Psoas muscle (tissue), 8 donors: ENCODE measurements at regions of chr4 and their contacts with region 1.

Region 1: GRCh38 chr4:2402029-2402428 is 16.4 kb downstream of the ZFYVE28 start:
- DNase-seq: peak; percentile 80 to 86
- ATAC-seq: peak; percentile 88 to 95 (median 93)
- H3K4me3 ChIP-seq: peak overlapping the region; percentile 54
- H3K27ac ChIP-seq: peak overlapping the region; percentile 71
- H3K4me1 ChIP-seq: peaks cover 24% of the 10 kb centered on the region
- H3K27me3 ChIP-seq: no peaks in the 10 kb centered on the region
- CTCF ChIP-seq: no peak

Region 2: DNA sequence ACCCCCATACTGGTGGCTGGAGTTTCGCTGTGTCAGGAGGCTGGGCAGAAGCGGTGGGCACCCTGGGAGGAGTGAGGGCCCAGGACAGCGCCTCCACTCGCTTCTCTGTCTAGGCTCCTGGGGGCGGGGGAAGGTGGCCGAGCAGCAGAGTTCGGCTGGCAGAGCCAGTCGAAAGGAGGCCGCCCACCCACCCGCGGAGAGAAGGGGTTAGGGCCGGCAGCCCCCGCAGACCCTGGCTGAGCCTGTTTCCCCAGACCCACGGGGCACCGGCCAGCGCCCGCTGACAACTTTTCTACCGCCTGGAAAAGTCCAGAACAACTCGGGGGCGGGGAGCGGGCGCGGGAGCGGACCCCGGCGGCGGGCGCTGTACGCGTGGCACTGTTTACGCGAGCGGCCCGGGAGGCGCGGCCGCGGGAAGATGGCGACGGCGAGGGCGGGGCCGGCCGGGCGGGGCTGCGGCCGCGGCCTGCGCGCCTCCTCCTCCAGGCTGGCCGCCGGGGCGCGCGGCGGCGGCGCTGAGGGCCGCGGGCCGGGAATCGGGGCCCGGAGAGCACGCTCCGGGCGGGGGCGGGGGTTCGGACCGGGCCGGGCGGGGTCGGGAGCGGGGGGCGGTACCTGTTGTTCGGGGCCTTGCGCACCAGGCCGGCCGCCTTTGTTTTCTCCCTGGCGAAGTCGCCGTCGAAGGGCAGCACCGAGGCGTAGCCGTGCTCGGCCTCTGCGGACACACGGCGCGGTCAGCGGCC is 140.7 kb before region 1 on chr4:
- intact Hi-C with region 1: loop called in 1 of 2 experiments (anchors 5 kb)
- DNase-seq: peak; percentile 62 to 76
- ATAC-seq: peak in 3 of 4 donors; percentile 14 to 25 (median 25)
- H3K4me3 ChIP-seq: peak overlapping the region; percentile 99
- H3K27ac ChIP-seq: peak overlapping the region; percentile 94
- H3K4me1 ChIP-seq: peaks cover 66% of the 10 kb centered on the region
- H3K27me3 ChIP-seq: no peaks in the 10 kb centered on the region
- CTCF ChIP-seq: no peak

Region 3: DNA sequence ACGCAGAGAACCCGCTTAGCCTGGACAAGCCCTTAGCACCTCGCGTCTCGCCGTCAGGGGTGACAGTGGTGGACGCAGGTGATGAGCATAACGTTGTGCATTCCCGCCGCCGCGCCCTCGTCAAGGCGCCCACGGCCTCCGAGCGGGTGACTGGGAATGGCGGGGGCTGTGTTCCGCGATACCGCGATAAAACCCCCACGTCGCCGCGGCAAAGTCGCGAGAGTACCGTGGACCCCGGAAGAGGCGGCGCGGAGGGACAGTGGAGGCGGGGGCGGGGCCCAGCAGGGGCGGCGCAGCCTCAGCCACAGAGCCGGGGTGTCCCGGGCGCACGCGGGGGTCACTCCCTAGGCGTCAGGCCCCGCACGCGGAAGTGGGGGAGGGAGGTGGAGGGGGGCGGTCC is 37.4 kb before region 1 on chr4:
- intact Hi-C with region 1: loop called in 1 of 2 experiments (anchors 5 kb)
- DNase-seq: peak; percentile 56 to 67
- ATAC-seq: peak in 2 of 4 donors; percentile 15 to 44
- H3K4me3 ChIP-seq: peak overlapping the region; percentile 56
- H3K27ac ChIP-seq: no peak overlapping the region
- H3K4me1 ChIP-seq: peaks cover 28% of the 10 kb centered on the region
- H3K27me3 ChIP-seq: no peaks in the 10 kb centered on the region
- CTCF ChIP-seq: no peak